T-cell (primary cell): ENCODE measurements at regions of chr12 and their contacts with region 1.

Region 1: DNA sequence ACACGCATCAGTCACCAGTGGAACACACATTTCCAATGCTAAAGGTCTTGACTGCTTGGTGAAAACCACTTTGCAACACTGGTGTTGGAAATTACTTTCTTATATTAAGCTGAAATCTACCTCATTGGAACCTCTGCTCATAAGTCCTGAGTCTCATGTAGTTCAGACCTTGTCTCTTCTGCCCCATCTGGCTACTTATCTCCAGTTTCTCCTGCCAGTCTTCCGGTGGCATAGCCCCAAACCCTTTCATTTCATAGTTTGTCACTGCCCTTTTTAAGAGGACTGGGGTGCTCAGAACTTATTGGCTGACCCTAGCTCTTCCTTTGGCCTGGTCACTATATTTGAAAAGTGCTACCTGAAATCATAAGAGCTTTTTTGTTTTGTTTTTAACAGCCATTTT is 43.7 kb downstream of the HELB start:
- DNase-seq: no peak
- ATAC-seq: no peak
- H3K4me3 ChIP-seq: no peak overlapping the region
- H3K4me3 Mint-ChIP-seq: no peak overlapping the region
- H3K27ac ChIP-seq: no peak overlapping the region
- H3K27ac Mint-ChIP-seq: peak overlapping the region; percentile 23 to 71
- H3K4me1 ChIP-seq: no peaks in the 10 kb centered on the region
- H3K4me1 Mint-ChIP-seq: peaks cover 27 to 31% (median 28%) of the 10 kb centered on the region in 3 donors
- H3K27me3 ChIP-seq: no peaks in the 10 kb centered on the region
- H3K27me3 Mint-ChIP-seq: no peaks in the 10 kb centered on the region

Region 2: DNA sequence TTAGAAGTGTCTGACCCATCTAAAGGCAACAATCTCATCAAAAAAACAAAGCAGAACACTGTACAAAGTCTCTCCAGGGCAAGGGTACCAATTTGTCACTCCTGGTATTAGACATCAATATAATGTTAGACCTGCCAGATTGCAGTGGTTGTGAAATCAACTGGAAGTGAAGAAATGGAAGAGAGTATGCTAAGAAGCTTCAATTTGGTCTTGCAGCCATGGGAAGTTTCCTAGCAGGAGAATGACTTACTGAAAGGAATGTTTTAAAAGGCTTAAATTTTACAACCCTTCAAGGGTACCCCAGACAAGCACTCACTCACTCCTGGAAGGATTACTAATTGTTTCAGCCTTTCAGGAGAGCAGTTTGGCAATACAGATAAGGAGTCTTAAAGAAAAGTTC is 234.4 kb before region 1 on chr12:
- CTCF ChIA-PET with region 1: no interaction called
- POLR2A ChIA-PET with region 1: no interaction called
- DNase-seq: no peak
- ATAC-seq: no peak
- H3K4me3 ChIP-seq: no peak overlapping the region
- H3K4me3 Mint-ChIP-seq: no peak overlapping the region
- H3K27ac ChIP-seq: no peak overlapping the region
- H3K27ac Mint-ChIP-seq: no peak overlapping the region
- H3K4me1 ChIP-seq: no peaks in the 10 kb centered on the region
- H3K4me1 Mint-ChIP-seq: peaks cover 0 to 4% (median 2%) of the 10 kb centered on the region in 3 donors
- H3K27me3 ChIP-seq: peaks cover 0 to 5% of the 10 kb centered on the region in 2 experiments
- H3K27me3 Mint-ChIP-seq: peaks cover 0 to 2% of the 10 kb centered on the region in 2 donors

Region 3: GRCh38 chr12:66290716-66291200 is 55.2 kb before region 1 on chr12:
- CTCF ChIA-PET with region 1: no interaction called
- POLR2A ChIA-PET with region 1: no interaction called
- DNase-seq: peak in 13 of 35 experiments; percentile 2 to 63 (median 18)
- ATAC-seq: peak; percentile 56 to 69 (median 66)
- H3K4me3 ChIP-seq: no peak overlapping the region
- H3K4me3 Mint-ChIP-seq: peak overlapping the region; percentile 31 to 71 (median 41)
- H3K27ac ChIP-seq: peak overlapping the region; percentile 45
- H3K27ac Mint-ChIP-seq: peak overlapping the region; percentile 85 to 92
- H3K4me1 ChIP-seq: peaks cover 52 to 70% of the 10 kb centered on the region in 2 experiments
- H3K4me1 Mint-ChIP-seq: peaks cover 75 to 82% (median 79%) of the 10 kb centered on the region in 3 donors
- H3K27me3 ChIP-seq: no peaks in the 10 kb centered on the region
- H3K27me3 Mint-ChIP-seq: no peaks in the 10 kb centered on the region

Region 4: GRCh38 chr12:66321435-66321834 is 24.5 kb before region 1 on chr12:
- CTCF ChIA-PET with region 1: no interaction called
- POLR2A ChIA-PET with region 1: no interaction called
- DNase-seq: no peak
- ATAC-seq: no peak
- H3K4me3 ChIP-seq: no peak overlapping the region
- H3K4me3 Mint-ChIP-seq: no peak overlapping the region
- H3K27ac ChIP-seq: no peak overlapping the region
- H3K27ac Mint-ChIP-seq: peak overlapping the region; percentile 53 to 70
- H3K4me1 ChIP-seq: peaks cover 3 to 4% of the 10 kb centered on the region in 2 experiments
- H3K4me1 Mint-ChIP-seq: peaks cover 46 to 66% (median 64%) of the 10 kb centered on the region in 3 donors
- H3K27me3 ChIP-seq: no peaks in the 10 kb centered on the region
- H3K27me3 Mint-ChIP-seq: no peaks in the 10 kb centered on the region

Region 5: GRCh38 chr12:66388517-66388916 is 42.6 kb after region 1 on chr12:
- CTCF ChIA-PET with region 1: interaction called in 1 of 2 experiments, 12 read pairs
- POLR2A ChIA-PET with region 1: no interaction called
- DNase-seq: no peak
- ATAC-seq: no peak
- H3K4me3 ChIP-seq: no peak overlapping the region
- H3K4me3 Mint-ChIP-seq: no peak overlapping the region
- H3K27ac ChIP-seq: no peak overlapping the region
- H3K27ac Mint-ChIP-seq: no peak overlapping the region
- H3K4me1 ChIP-seq: peaks cover 3 to 6% of the 10 kb centered on the region in 2 experiments
- H3K4me1 Mint-ChIP-seq: peaks cover 2 to 6% (median 5%) of the 10 kb centered on the region in 3 donors
- H3K27me3 ChIP-seq: peaks cover 0 to 3% of the 10 kb centered on the region in 2 experiments
- H3K27me3 Mint-ChIP-seq: peaks cover 0 to 14% of the 10 kb centered on the region in 2 donors

Region 6: DNA sequence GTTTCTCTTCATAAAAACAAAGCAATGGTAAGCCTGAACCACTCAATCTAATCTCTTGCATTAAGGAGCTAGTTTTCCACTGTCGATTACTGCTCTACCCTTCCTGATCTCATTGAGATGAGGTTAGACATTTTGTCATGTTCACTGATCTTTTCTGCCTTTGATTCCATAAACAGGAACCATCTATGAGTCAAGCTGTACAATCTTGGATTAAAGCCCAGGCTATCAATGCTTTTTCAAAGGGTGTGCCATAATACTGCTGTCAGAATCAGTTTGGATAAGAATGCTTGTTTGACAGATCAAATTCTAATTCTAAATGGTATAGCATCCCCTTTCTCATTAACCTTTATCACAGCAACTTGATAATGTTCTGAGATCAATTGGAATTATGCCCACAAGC is 316.8 kb after region 1 on chr12:
- CTCF ChIA-PET with region 1: no interaction called
- POLR2A ChIA-PET with region 1: no interaction called
- DNase-seq: no peak
- ATAC-seq: no peak
- H3K4me3 ChIP-seq: no peak overlapping the region
- H3K4me3 Mint-ChIP-seq: no peak overlapping the region
- H3K27ac ChIP-seq: no peak overlapping the region
- H3K27ac Mint-ChIP-seq: no peak overlapping the region
- H3K4me1 ChIP-seq: no peaks in the 10 kb centered on the region
- H3K4me1 Mint-ChIP-seq: peaks cover 0 to 5% (median 0%) of the 10 kb centered on the region in 3 donors
- H3K27me3 ChIP-seq: peaks cover 0 to 3% of the 10 kb centered on the region in 2 experiments
- H3K27me3 Mint-ChIP-seq: peaks cover 2 to 17% of the 10 kb centered on the region in 2 donors